ENCODE measurements at regions of chr3 and their contacts with region 1.

Region 1: DNA sequence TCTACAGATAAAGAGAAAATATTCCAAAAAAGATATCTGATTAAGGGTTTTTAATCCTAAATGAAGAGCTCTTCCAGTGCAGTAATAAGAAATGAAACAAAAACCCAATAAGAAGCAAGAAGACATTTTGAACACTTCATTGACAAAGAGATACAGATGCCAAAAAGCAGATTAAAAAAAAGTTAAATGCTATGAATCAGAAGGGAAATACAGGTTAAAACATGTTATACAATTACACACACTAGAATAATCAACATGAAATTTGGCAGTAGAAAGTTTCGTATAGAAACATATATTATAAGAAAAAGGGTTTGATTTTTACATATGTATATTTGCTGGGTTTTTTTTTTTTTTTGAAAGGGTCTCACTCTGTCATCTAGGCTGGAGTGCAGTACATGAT is 135.0 kb downstream of the ROBO1 start:
- DNase-seq: no peak
- H3K4me3 ChIP-seq: no peak overlapping the region
- H3K27ac ChIP-seq: no peak overlapping the region
- H3K4me1 ChIP-seq: no peaks in the 10 kb centered on the region
- H3K27me3 ChIP-seq: no peaks in the 10 kb centered on the region
- CTCF ChIP-seq: no peak

Region 2: DNA sequence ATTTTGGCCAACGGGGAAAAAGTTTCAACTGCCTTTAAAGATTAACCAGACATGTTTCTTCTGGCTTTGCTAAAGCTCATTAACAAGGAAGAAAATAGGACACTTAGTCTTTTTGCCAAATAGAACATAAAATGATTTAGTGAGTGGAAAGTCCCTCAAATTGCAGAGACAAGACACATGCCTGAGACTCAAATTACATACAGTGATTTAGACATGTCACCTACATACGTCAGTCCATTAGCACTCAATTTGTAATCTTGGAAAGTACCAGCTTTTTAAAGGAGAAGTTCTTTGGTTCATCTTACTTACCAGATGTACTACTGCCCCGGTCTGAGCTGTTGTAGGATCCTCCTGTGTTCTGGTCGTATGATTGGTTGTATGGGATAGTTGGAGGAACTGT is 999.2 kb before region 1 on chr3:
- CTCF ChIA-PET with region 1: no interaction called
- POLR2A ChIA-PET with region 1: no interaction called
- intact Hi-C with region 1: loop called (anchors 5 kb)
- DNase-seq: no peak
- H3K4me3 ChIP-seq: no peak overlapping the region
- H3K27ac ChIP-seq: no peak overlapping the region
- H3K4me1 ChIP-seq: no peaks in the 10 kb centered on the region
- H3K27me3 ChIP-seq: no peaks in the 10 kb centered on the region
- CTCF ChIP-seq: no peak

Measured in PC-9 (cell line).